Prostate gland (tissue), 2 donors: ENCODE measurements at regions of chr1 and their contacts with region 1.

Region 1: DNA sequence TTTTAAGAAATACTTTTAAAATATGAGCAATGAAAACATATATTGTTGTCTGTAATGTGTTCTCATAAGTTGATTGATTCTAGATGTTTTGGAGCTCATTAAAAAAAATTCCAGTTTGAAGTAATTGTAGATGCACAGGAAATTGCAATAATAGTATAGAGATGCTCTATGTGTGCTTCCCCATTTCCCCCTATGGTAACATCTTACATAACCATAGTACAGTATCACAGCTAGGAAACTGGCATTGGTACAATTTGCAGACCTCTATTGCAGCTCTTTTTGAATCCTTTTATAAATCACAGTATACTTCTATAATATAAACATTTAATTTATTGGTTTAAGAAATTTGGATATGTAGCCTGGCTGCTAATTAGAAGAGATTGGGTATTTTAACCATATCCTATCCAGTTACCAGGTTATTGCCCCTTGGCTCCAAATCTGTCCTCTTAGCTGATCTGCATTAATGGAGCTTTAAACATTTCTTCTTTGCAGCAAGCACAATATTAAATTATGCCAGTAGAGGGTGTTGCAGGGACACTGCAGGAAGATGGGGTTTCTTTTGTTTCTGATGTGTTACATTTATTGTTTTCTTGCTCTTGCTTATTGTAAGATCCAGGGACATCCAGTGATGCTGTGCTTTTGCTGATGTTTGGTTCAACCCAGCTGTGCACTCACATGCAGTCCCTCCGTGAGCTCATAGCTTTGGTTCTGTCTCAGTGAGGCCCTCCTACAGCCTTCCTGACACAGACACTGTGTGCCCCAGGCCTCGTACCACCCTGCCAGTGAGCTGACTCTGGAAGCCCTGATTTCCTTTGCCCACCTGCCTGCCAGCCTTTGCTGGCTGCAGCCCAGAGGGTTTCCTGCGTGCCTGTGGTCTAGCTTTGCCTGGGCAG is 103.3 kb downstream of the RABGAP1L start:
- DNase-seq: peak; percentile 7
- H3K4me3 ChIP-seq: no peak overlapping the region
- H3K27ac ChIP-seq: no peak overlapping the region
- H3K4me1 ChIP-seq: no peaks in the 10 kb centered on the region
- H3K27me3 ChIP-seq: no peaks in the 10 kb centered on the region
- CTCF ChIP-seq: peak in 3 of 4 experiments; percentile 52 to 62 (median 59)
- POLR2A ChIP-seq: no peak

Region 2: DNA sequence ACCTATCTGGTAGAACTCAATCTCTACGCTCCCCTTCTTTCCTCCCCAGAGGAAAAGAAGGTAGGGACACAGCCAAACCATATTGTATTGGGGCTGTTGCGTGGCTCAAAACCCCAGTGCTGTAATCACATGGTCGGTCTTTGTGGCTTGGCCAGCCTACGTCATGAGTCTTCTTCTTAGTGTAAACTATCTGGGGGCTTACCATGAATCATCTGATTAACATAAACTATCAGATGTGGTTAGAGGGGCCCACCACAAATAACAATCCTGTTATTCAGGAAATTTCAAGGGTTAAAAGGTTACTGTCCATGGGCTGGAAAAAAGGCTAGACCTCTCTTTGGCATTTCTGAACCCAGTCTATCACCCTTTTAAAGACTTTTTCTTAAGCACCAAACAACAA is 135.7 kb after region 1 on chr1:
- intact Hi-C with region 1: no loop called
- DNase-seq: no peak
- H3K4me3 ChIP-seq: no peak overlapping the region
- H3K27ac ChIP-seq: no peak overlapping the region
- H3K4me1 ChIP-seq: no peaks in the 10 kb centered on the region
- H3K27me3 ChIP-seq: no peaks in the 10 kb centered on the region
- CTCF ChIP-seq: no peak
- POLR2A ChIP-seq: no peak

Region 3: GRCh38 chr1:174519844-174520243 is 257.2 kb after region 1 on chr1:
- intact Hi-C with region 1: no loop called
- DNase-seq: no peak
- H3K4me3 ChIP-seq: no peak overlapping the region
- H3K27ac ChIP-seq: no peak overlapping the region
- H3K4me1 ChIP-seq: no peaks in the 10 kb centered on the region
- H3K27me3 ChIP-seq: no peaks in the 10 kb centered on the region
- CTCF ChIP-seq: no peak
- POLR2A ChIP-seq: no peak

Region 4: DNA sequence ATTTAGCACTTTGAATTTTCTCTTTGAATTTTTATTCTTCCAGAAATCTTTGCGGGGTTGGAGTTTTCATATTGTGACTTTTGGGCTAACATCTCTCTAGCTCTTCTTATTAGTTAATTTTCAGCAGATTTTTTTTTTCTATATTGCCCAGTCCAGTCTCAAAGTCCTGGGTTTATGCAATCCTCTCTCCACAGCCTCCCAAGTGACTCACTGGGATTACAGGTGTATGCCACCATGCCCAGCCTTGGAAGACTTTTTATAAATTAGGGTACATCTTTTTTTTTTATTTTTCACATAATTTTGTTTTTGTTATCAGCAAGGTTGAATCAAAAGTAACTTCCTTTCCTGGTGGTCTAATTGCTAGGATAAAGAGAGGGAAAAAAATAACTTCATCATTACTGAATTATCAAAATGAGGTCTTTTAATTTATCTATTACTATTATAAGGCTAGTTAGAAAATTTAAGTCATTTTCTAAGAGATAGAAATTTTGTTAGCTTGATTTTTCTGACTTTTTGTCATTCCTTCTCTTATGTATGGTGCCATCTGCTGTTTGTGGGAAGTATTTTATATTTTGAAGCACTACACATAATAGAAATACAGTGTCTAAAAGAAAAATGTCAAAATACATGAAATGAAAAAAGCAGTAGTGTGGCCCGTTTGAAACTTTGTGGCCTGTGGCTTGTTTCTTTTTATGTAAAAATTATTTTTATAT is 463.7 kb after region 1 on chr1:
- intact Hi-C with region 1: loop called (anchors 2 kb)
- DNase-seq: no peak
- H3K4me3 ChIP-seq: no peak overlapping the region
- H3K27ac ChIP-seq: no peak overlapping the region
- H3K4me1 ChIP-seq: no peaks in the 10 kb centered on the region
- H3K27me3 ChIP-seq: no peaks in the 10 kb centered on the region
- CTCF ChIP-seq: peak in 3 of 4 experiments; percentile 31 to 58 (median 45)
- POLR2A ChIP-seq: no peak

Region 5: GRCh38 chr1:174747613-174748012 is 485.0 kb after region 1 on chr1:
- intact Hi-C with region 1: loop called (anchors 5 kb)
- DNase-seq: no peak
- H3K4me3 ChIP-seq: no peak overlapping the region
- H3K27ac ChIP-seq: no peak overlapping the region
- H3K4me1 ChIP-seq: no peaks in the 10 kb centered on the region
- H3K27me3 ChIP-seq: no peaks in the 10 kb centered on the region
- CTCF ChIP-seq: no peak
- POLR2A ChIP-seq: no peak